Endothelial cell of umbilical vein (primary cell): ENCODE measurements at regions of chr1 and their contacts with region 1.

Region 1: DNA sequence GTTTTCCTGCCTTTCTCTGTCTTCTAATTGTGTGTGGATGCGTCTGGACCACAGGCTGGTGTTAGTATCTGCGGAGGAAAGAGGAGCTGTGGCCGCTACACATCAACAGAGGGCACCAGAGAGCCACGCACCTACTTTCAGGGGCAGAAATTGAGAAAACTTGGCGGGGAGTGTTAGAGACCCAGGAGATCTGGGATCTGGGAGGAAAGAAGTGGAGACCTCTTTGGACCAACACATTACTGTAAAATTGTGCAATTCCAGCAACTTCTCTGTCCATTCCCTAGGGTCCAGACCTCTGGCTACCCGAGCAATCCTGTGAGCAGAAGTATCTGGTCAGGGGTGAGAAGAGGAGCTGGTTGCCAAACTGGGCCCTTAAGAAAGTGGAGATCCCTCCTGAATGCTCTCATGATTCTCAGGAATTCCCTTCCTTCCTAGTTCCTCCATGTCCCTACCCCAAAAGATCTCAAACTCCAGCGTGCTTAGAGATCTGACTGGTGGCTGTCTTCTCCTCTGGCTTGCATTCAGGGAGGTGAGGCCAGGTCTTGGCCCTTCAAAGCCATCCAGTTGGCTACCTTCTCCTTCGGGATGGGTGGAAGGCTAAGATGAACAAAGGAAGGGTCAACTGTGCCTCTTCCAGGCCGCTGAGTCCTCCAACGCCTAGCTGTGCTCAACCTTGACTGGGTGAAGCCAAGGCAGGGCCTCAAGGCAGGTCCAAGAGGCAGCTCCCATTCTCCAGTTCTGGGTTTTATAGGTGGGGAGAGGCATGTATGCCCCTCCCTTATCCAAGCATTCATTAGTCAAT is 1.2 kb upstream of the KIRREL1 start:
- DNase-seq: peak; percentile 73
- H3K4me3 ChIP-seq: no peak overlapping the region
- H3K27ac ChIP-seq: no peak overlapping the region
- H3K4me1 ChIP-seq: peaks cover 19% of the 10 kb centered on the region
- H3K27me3 ChIP-seq: peaks cover 14 to 21% of the 10 kb centered on the region in 2 experiments
- CTCF ChIP-seq: peak; percentile 93 to 94
- POLR2A ChIP-seq: no peak

Region 2: GRCh38 chr1:157978586-157979403 is 13.4 kb before region 1 on chr1:
- CTCF ChIA-PET with region 1: interaction called, 31 read pairs
- POLR2A ChIA-PET with region 1: no interaction called
- dilution Hi-C with region 1: no loop called
- intact Hi-C with region 1: no loop called
- DNase-seq: no peak
- H3K4me3 ChIP-seq: peak overlapping the region in 1 of 3 experiments; percentile 7
- H3K27ac ChIP-seq: no peak overlapping the region
- H3K4me1 ChIP-seq: peaks cover 3% of the 10 kb centered on the region
- H3K27me3 ChIP-seq: peaks cover 22 to 25% of the 10 kb centered on the region in 2 experiments
- CTCF ChIP-seq: peak in 1 of 2 donors; percentile 19
- POLR2A ChIP-seq: no peak

Region 3: GRCh38 chr1:158019171-158019868 is 27.1 kb after region 1 on chr1:
- CTCF ChIA-PET with region 1: interaction called, 72 read pairs
- POLR2A ChIA-PET with region 1: interaction called, 5 read pairs
- dilution Hi-C with region 1: no loop called
- intact Hi-C with region 1: loop called (anchors 1 kb)
- DNase-seq: peak; percentile 87
- H3K4me3 ChIP-seq: peak overlapping the region in 1 of 3 experiments; percentile 2
- H3K27ac ChIP-seq: peak overlapping the region; percentile 95
- H3K4me1 ChIP-seq: peaks cover 49% of the 10 kb centered on the region
- H3K27me3 ChIP-seq: no peaks in the 10 kb centered on the region
- CTCF ChIP-seq: no peak
- POLR2A ChIP-seq: peak; percentile 38

Region 4: DNA sequence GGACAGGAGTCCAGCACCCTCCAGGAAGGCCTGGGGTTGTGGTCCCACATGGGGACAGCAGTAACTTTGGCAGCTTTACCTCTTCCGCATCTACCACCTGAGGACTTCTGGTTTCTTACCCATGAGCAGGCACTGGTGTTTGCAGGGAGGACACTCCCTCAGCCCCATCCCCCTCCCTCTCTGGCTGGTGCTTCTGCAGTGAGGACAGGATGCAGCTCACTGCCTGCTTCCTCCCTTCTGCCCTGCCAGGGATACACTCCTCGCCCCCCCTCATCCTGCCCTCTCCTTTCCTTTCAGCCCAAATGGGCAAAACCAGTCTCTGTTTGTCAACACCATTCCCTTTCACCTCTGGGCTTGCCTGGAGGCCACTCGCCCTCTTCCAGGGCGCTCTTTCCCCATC is 63.6 kb after region 1 on chr1:
- CTCF ChIA-PET with region 1: interaction called, 11 read pairs
- POLR2A ChIA-PET with region 1: no interaction called
- dilution Hi-C with region 1: no loop called
- intact Hi-C with region 1: no loop called
- DNase-seq: peak; percentile 85
- H3K4me3 ChIP-seq: no peak overlapping the region
- H3K27ac ChIP-seq: no peak overlapping the region
- H3K4me1 ChIP-seq: peaks cover 19% of the 10 kb centered on the region
- H3K27me3 ChIP-seq: no peaks in the 10 kb centered on the region
- CTCF ChIP-seq: no peak
- POLR2A ChIP-seq: no peak

Region 5: DNA sequence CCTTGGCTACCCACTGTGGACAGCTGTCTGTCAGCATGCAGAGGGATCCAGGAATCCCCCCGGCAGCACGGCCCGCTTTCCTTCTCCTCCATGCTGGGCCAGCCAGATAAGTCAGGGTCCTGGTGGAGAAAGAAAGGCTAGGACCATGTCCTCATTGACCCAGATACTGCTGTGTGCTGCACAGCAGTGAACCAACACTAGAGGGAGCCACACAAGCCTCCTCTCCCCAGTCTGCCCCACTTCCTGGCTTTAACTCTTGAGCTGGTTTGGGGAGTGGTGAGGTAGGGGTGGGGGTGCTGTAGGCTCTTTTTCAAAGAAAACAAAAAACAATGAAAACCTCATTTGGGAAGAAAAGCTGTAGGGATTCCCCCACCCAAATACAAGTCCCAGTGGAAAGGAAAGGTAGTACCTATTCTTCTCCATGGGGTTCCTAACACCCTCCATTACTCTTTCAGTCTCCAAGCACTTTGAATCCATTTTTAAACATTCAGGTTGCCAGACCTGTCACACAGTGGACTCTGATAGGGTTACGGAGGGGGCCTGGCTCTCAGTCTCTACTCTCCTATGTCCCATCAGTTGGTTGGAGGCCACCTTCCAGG is 103.6 kb after region 1 on chr1:
- CTCF ChIA-PET with region 1: interaction called, 68 read pairs
- POLR2A ChIA-PET with region 1: no interaction called
- dilution Hi-C with region 1: no loop called
- intact Hi-C with region 1: no loop called
- DNase-seq: peak; percentile 41
- H3K4me3 ChIP-seq: no peak overlapping the region
- H3K27ac ChIP-seq: no peak overlapping the region
- H3K4me1 ChIP-seq: no peaks in the 10 kb centered on the region
- H3K27me3 ChIP-seq: no peaks in the 10 kb centered on the region
- CTCF ChIP-seq: peak; percentile 81 to 82
- POLR2A ChIP-seq: no peak

Region 6: GRCh38 chr1:158117854-158118704 is 125.8 kb after region 1 on chr1:
- CTCF ChIA-PET with region 1: interaction called, 460 read pairs
- POLR2A ChIA-PET with region 1: no interaction called
- dilution Hi-C with region 1: no loop called
- intact Hi-C with region 1: loop called (anchors 1 kb)
- DNase-seq: peak; percentile 52
- H3K4me3 ChIP-seq: no peak overlapping the region
- H3K27ac ChIP-seq: no peak overlapping the region
- H3K4me1 ChIP-seq: peaks cover 2% of the 10 kb centered on the region
- H3K27me3 ChIP-seq: peaks cover 31 to 32% of the 10 kb centered on the region in 2 experiments
- CTCF ChIP-seq: peak; percentile 49 to 57
- POLR2A ChIP-seq: no peak